Breast epithelium (tissue), 4 donors: ENCODE measurements at regions of chr21 and their contacts with region 1.

Region 1: DNA sequence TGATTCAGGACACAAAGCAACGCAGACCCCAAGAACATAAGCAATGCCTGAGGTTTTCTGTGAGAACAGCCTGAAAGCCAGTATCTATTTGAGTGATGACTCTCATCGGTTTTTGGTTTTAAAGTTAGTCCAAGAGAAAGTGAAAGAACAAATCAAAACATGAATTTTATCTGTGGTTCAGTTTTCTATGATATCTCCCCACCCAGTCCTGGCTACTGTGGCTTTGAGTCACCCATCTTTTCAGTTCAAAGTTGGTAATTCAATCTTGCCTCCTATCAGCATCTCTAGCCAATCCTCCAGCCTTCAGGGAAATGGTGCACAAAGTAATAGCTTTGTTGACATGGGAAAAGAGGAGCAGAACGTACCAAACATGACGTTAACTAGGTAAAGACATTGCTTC is 40.5 kb upstream of the KRTAP19-8 start:
- DNase-seq: no peak
- H3K4me3 ChIP-seq: no peak overlapping the region
- H3K27ac ChIP-seq: no peak overlapping the region
- H3K4me1 ChIP-seq: no peaks in the 10 kb centered on the region
- H3K27me3 ChIP-seq: no peaks in the 10 kb centered on the region
- CTCF ChIP-seq: no peak
- POLR2A ChIP-seq: no peak

Region 2: GRCh38 chr21:31135531-31136184 is 56.9 kb after region 1 on chr21:
- intact Hi-C with region 1: loop called (anchors 2 kb)
- DNase-seq: no peak
- H3K4me3 ChIP-seq: no peak overlapping the region
- H3K27ac ChIP-seq: no peak overlapping the region
- H3K4me1 ChIP-seq: no peaks in the 10 kb centered on the region
- H3K27me3 ChIP-seq: no peaks in the 10 kb centered on the region
- CTCF ChIP-seq: no peak
- POLR2A ChIP-seq: no peak